Activated CD4-positive, alpha-beta T cell treated with anti-CD3 and anti-CD28 coated beads for 36 hours (primary cell): ENCODE measurements at regions of chr17 and their contacts with region 1.

Region 1: GRCh38 chr17:38351412-38352222 is at the start of gene SOCS7:
- DNase-seq: peak; percentile 95
- ATAC-seq: peak; percentile 89
- H3K4me3 Mint-ChIP-seq: peak within 1 kb of the TSS; percentile 85
- H3K27ac Mint-ChIP-seq: peak within 1 kb of the TSS; percentile 94
- H3K4me1 Mint-ChIP-seq: peaks cover 49% of the 10 kb centered on the region
- H3K27me3 Mint-ChIP-seq: no peaks in the 10 kb centered on the region
- total RNA-seq, gene SOCS7: 21.8 to 25.3 TPM

Region 2: DNA sequence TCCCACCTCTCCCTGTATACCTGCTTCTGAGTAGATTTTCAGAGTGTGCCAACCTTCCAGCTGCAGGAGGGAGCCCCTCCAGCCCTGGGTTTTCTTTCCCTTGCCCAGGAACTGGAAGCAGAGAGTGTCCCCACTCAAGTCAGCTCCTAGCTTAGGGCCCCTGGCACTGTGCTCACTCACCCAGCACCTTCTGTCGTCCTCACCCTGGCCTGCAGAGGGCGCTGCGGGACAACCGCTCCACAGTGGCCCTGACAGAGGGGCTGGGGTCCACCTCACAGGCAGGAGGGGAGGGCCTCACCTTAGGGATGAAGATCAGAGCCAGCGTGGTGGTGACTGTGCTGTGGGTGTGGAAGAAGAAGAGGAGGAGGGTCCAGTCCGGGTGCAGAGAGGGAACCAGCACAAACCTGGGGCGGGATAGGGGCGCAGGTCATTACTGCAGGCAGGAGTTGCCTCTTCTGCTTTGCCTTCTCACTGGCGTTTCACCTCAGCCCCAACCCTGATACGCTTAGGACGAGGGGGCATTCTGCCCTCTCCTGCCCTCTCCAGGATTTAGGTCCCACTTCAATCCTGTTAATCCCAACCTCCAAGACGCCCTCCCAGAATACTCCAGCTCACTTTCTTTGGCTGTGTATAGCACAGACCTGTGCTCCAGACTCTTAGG is 17.9 kb before region 1 on chr17:
- CTCF ChIA-PET with region 1: interaction called, 16 read pairs
- POLR2A ChIA-PET with region 1: no interaction called
- intact Hi-C with region 1: no loop called
- DNase-seq: peak; percentile 81
- ATAC-seq: peak; percentile 91
- H3K4me3 Mint-ChIP-seq: no peak overlapping the region
- H3K27ac Mint-ChIP-seq: no peak overlapping the region
- H3K4me1 Mint-ChIP-seq: no peaks in the 10 kb centered on the region
- H3K27me3 Mint-ChIP-seq: peaks cover 4% of the 10 kb centered on the region

Region 3: GRCh38 chr17:38415250-38416194 is 63.9 kb after region 1 on chr17:
- CTCF ChIA-PET with region 1: interaction called, 88 read pairs
- POLR2A ChIA-PET with region 1: interaction called, 7 read pairs
- intact Hi-C with region 1: loop called (anchors 1 kb)
- DNase-seq: peak; percentile 64
- ATAC-seq: peak; percentile 69
- H3K4me3 Mint-ChIP-seq: peak overlapping the region; percentile 62
- H3K27ac Mint-ChIP-seq: peak overlapping the region; percentile 92
- H3K4me1 Mint-ChIP-seq: peaks cover 13% of the 10 kb centered on the region
- H3K27me3 Mint-ChIP-seq: peaks cover 32% of the 10 kb centered on the region

Region 4: GRCh38 chr17:38485146-38485468 is 133.5 kb after region 1 on chr17:
- CTCF ChIA-PET with region 1: interaction called, 3 read pairs
- POLR2A ChIA-PET with region 1: no interaction called
- intact Hi-C with region 1: loop called in 1 of 2 experiments (anchors 1 kb)
- DNase-seq: no peak
- ATAC-seq: no peak
- H3K4me3 Mint-ChIP-seq: no peak overlapping the region
- H3K27ac Mint-ChIP-seq: no peak overlapping the region
- H3K4me1 Mint-ChIP-seq: peaks cover 8% of the 10 kb centered on the region
- H3K27me3 Mint-ChIP-seq: no peaks in the 10 kb centered on the region

Region 5: GRCh38 chr17:38605888-38606645 is 254.4 kb after region 1 on chr17 and contains the start of gene SRCIN1:
- CTCF ChIA-PET with region 1: no interaction called
- POLR2A ChIA-PET with region 1: no interaction called
- intact Hi-C with region 1: loop called in 1 of 2 experiments (anchors 5 kb)
- DNase-seq: peak; percentile 79
- ATAC-seq: peak; percentile 42
- H3K4me3 Mint-ChIP-seq: peak within 1 kb of the TSS; percentile 66
- H3K27ac Mint-ChIP-seq: no peak within 1 kb of the TSS
- H3K4me1 Mint-ChIP-seq: peaks cover 16% of the 10 kb centered on the region
- H3K27me3 Mint-ChIP-seq: peaks cover 56% of the 10 kb centered on the region
- total RNA-seq, gene SRCIN1: 0.72 to 0.73 TPM